Dendritic cell treated with granulocyte-macrophage colony-stimulating factor and Interleukin-4, amounts not matched to agents 40 ng/mL and 50 ng/mL, for 4 days (primary cell): ENCODE measurements at regions of chr22 and their contacts with region 1.

Region 1: GRCh38 chr22:42437488-42438292 is 5.5 kb upstream of the NFAM1 start:
- H3K4me3 Mint-ChIP-seq: peak overlapping the region; percentile 74
- H3K27ac Mint-ChIP-seq: peak overlapping the region; percentile 82
- H3K4me1 Mint-ChIP-seq: peaks cover 84% of the 10 kb centered on the region
- H3K27me3 Mint-ChIP-seq: peaks cover 2% of the 10 kb centered on the region

Region 2: GRCh38 chr22:41966607-41967240 is 471.0 kb before region 1 on chr22:
- intact Hi-C with region 1: loop called (anchors 10 kb)
- H3K4me3 Mint-ChIP-seq: no peak overlapping the region
- H3K27ac Mint-ChIP-seq: peak overlapping the region; percentile 49
- H3K4me1 Mint-ChIP-seq: peaks cover 8% of the 10 kb centered on the region
- H3K27me3 Mint-ChIP-seq: peaks cover 18% of the 10 kb centered on the region

Region 3: DNA sequence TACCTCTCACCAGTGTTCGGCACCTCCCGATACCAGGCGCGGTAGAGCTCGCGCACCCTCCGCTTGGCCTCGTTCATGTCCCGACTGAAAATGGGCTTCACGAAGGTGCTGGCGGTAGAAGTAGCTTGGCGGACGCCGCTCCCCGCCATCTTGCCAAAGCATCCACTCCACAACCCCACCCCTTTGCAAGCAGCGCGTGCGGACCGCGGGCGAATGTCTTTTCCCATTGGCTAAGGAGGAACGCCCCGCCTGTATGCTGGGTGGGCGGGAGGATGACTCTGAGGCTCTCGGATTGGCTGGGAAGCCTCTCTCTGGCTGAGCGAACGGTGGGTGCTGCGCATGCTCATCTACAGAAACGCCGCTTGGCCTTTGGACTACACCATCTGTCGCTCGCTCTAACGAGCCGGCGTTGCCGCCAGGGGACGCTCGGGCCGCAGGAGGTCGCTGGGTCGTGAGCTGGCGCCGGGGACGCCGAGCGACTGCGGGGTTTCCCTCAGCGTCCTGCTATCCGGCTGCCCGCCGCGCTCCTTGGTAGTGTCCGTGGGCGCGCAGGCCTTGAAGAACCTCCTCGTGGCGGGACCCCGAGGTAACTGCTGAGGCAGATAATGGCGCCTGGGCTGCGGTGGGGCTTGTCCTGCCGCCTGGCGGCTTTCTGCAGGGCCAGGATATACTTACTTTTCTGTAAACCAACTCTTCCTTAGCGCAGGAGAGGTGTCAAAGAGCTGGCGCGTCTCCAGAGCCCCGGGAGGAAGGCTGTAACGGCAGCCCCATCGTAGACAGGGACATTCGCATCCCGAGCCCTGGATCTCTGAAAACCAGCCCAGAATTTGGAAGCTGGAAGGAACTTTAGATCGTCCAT is 346.9 kb before region 1 on chr22 and contains the start of gene NDUFA6:
- intact Hi-C with region 1: loop called (anchors 5 kb)
- H3K4me3 Mint-ChIP-seq: peak within 1 kb of the TSS; percentile 98
- H3K27ac Mint-ChIP-seq: peak within 1 kb of the TSS; percentile 100
- H3K4me1 Mint-ChIP-seq: peaks cover 23% of the 10 kb centered on the region
- H3K27me3 Mint-ChIP-seq: no peaks in the 10 kb centered on the region

Region 4: DNA sequence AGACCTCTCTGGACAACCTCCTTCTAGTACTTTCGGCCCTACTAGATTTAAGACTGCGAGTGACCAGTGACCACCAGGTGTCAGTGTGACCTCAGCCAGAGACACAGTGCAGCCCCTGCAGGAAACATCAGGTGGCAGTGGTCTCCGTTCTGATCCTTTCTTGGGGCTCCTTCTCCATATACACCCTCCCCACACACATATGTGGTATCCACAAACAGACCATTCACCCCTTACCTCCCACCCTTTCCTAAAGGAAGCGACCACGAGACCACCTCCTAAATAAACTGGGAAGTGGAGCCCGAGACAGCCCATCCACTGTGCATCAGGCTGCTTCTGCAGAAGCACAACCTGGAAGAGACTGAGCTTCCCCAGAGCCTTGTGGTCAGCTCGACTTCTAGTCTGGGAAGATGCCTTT is 268.6 kb before region 1 on chr22:
- intact Hi-C with region 1: loop called (anchors 1 kb)
- H3K4me3 Mint-ChIP-seq: no peak overlapping the region
- H3K27ac Mint-ChIP-seq: no peak overlapping the region
- H3K4me1 Mint-ChIP-seq: peaks cover 30% of the 10 kb centered on the region
- H3K27me3 Mint-ChIP-seq: no peaks in the 10 kb centered on the region

Region 5: GRCh38 chr22:42277988-42278776 is 159.5 kb before region 1 on chr22:
- intact Hi-C with region 1: loop called (anchors 5 kb)
- H3K4me3 Mint-ChIP-seq: no peak overlapping the region
- H3K27ac Mint-ChIP-seq: no peak overlapping the region
- H3K4me1 Mint-ChIP-seq: peaks cover 5% of the 10 kb centered on the region
- H3K27me3 Mint-ChIP-seq: peaks cover 83% of the 10 kb centered on the region

Region 6: DNA sequence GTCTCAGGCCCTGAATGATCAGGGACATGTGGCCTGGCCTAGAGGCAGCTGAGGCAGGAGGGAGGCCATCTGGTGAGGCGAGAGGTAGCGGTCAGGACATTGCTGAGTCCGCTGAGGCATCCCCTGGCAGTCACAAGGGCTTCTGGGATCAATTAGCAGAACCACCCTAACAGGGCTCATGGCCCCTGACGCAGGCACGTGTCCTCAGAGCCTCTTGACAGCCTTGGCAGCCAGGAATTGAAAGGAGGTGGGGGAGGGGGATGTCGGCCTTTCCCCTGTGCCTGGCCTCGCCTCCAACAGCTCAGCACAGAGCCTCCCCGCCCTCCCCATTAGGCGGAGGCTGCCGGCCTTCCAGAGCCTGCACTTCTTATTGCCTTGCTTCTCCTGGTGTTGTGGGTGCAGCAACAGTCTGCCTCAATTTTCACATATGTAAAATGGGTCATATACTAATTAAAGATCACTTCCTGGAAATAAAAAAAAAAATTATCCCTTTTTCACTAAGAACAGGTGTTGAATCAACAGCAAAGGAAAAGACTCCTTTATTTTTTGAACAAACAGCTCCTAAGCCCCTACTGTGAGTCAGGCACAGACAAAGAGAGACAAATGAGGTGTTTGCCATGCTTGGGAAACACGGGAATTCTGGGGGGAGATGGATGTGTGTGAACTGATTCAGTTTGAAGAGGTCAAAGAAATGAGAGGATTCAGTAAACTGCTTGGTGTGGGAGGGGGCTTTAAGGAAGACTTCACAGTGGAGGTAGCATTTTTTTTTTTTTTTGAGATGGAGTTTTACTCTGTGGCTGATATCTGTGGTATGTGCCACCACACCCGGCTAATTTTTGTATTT is 60.8 kb before region 1 on chr22:
- intact Hi-C with region 1: loop called (anchors 5 kb)
- H3K4me3 Mint-ChIP-seq: no peak overlapping the region
- H3K27ac Mint-ChIP-seq: peak overlapping the region; percentile 79
- H3K4me1 Mint-ChIP-seq: peaks cover 40% of the 10 kb centered on the region
- H3K27me3 Mint-ChIP-seq: peaks cover 34% of the 10 kb centered on the region

Region 7: DNA sequence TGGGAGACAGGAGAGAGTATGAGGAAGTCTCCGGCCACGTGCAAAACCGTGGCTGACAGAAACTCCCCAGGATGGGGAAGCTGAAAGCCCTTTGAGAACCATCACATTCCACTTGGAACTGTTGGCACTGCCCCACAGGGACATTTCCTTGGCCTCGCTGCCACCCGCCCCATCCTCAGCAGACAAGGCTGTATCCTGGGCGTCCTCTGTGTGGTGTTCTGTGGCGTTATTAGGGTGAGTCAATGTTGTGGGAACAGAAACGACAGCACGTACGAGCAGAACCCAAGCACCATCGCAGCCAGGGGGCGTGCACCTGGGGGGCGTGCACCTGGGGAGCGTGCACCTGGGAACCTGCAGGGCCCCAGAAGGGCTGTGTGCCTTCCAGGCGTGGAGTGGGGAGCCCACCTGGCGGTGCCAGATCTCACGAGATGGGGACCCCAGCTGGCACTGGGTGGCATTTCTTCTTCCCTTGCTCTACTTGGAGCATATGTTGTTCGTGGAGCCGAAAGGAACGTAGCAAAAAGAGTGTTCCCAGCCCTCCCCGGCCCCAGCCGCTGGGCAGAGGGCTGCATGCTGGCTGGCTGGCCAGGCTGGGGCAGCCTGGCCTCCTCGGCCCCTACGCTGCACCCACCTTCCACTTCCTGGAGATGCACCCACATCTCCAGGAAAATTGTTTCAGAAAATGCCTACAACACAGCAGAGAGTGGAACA is 40.9 kb before region 1 on chr22:
- intact Hi-C with region 1: loop called (anchors 2 kb)
- H3K4me3 Mint-ChIP-seq: peak overlapping the region; percentile 48
- H3K27ac Mint-ChIP-seq: peak overlapping the region; percentile 86
- H3K4me1 Mint-ChIP-seq: peaks cover 58% of the 10 kb centered on the region
- H3K27me3 Mint-ChIP-seq: peaks cover 25% of the 10 kb centered on the region